Ovary (tissue), 10 donors: ENCODE measurements at regions of chr15 and their contacts with region 1.

Region 1: GRCh38 chr15:88904624-88905327 is 8.4 kb downstream of the MFGE8 start:
- DNase-seq: peak; percentile 63 to 84 (median 81)
- H3K4me3 ChIP-seq: no peak overlapping the region
- H3K27ac ChIP-seq: no peak overlapping the region
- H3K4me1 ChIP-seq: no peaks in the 10 kb centered on the region
- H3K27me3 ChIP-seq: no peaks in the 10 kb centered on the region
- CTCF ChIP-seq: peak; percentile 83 to 95 (median 87)
- EP300 ChIP-seq: no peak
- POLR2A ChIP-seq: no peak

Region 2: GRCh38 chr15:88484682-88485331 is 420.0 kb before region 1 on chr15:
- intact Hi-C with region 1: loop called in 1 of 4 experiments (anchors 10 kb)
- DNase-seq: no peak
- H3K4me3 ChIP-seq: no peak overlapping the region
- H3K27ac ChIP-seq: no peak overlapping the region
- H3K4me1 ChIP-seq: no peaks in the 10 kb centered on the region
- H3K27me3 ChIP-seq: no peaks in the 10 kb centered on the region
- CTCF ChIP-seq: no peak
- EP300 ChIP-seq: no peak
- POLR2A ChIP-seq: no peak

Region 3: GRCh38 chr15:88844749-88845386 is 59.9 kb before region 1 on chr15:
- intact Hi-C with region 1: no loop called
- DNase-seq: no peak
- H3K4me3 ChIP-seq: no peak overlapping the region
- H3K27ac ChIP-seq: no peak overlapping the region
- H3K4me1 ChIP-seq: no peaks in the 10 kb centered on the region
- H3K27me3 ChIP-seq: no peaks in the 10 kb centered on the region
- CTCF ChIP-seq: no peak
- EP300 ChIP-seq: no peak
- POLR2A ChIP-seq: no peak

Region 4: GRCh38 chr15:88959445-88959844 is 54.7 kb after region 1 on chr15:
- intact Hi-C with region 1: no loop called
- DNase-seq: no peak
- H3K4me3 ChIP-seq: no peak overlapping the region
- H3K27ac ChIP-seq: no peak overlapping the region
- H3K4me1 ChIP-seq: no peaks in the 10 kb centered on the region
- H3K27me3 ChIP-seq: no peaks in the 10 kb centered on the region
- CTCF ChIP-seq: no peak
- EP300 ChIP-seq: no peak
- POLR2A ChIP-seq: no peak

Region 5: DNA sequence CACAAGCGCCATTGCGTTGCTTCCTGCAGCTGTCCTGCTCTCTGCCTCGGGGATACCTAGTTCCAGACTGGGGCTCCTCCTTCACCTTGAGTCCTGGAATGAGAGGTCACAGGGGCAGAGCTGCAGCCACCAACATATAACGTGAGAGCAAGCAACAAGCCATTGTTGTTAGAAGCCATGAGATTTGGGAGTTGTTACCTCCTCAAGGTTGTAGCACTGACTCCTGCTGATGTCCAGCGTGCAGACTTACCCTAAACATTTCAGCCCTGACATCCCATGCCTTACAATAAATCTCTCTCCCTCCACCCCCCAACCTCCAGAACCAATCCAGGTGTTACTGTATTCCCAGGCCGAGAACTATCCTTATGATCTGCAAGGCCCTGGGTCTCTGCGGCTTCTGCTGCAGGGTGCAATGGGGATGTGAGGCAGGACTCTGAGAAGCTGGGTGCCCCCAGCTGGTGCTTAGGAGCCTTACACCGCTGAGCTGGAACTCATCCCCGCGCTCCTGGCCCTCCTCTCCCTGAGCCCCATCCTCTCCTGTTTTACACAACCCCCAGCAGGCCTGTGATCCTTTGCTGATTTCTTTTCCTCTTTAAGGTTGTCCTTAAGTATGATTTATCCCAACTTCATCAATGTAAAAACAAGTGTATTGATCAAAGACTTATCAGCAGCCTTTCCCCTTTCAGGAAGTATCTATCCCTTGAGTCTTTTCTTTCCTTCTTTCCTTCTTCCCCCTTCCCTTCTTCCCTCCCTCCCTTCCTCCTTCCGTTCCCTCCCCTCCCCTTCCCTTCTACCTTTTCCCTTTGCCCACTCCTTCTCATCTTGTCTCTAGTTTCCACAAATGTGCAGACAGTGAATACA is 99.3 kb after region 1 on chr15:
- intact Hi-C with region 1: loop called in 1 of 4 experiments (anchors 5 kb)
- DNase-seq: no peak
- H3K4me3 ChIP-seq: no peak overlapping the region
- H3K27ac ChIP-seq: no peak overlapping the region
- H3K4me1 ChIP-seq: peaks cover 7% of the 10 kb centered on the region
- H3K27me3 ChIP-seq: no peaks in the 10 kb centered on the region
- CTCF ChIP-seq: no peak
- EP300 ChIP-seq: no peak
- POLR2A ChIP-seq: no peak

Region 6: DNA sequence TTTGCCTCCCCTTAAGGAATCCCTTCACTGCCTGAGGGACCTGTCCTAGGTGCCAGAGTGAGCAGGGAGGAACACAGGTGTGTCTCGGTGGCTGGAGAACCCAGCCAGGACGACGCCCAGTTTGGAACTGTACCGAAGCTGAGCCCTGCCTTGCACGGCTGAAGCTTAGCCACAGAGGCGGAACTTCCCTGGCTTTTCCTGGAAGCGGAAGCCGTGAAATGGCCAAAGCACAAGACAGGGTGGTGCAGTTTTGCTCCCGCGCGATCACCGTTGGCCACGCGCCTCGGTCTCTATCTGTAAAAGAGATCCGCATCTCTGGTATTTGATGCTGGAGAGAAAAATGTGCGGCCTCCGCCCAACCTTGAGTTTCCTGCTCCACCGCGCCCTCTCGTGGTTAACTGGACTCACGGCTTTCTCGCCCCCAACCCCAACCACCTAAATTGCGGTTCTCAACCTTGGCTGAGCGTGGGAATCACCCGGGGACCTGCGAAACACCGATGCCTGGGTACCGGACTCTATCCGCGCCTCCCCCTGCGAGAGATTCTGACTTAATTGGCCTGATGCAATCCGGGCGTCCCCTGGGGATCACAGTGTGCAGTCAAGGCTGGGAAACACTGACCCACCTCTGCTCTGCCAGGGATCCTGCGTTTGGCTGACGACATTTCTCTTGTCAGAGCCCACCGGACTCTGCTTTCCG is 112.7 kb after region 1 on chr15:
- intact Hi-C with region 1: loop called in 3 of 4 experiments (anchors 2 to 10 kb)
- DNase-seq: peak; percentile 67 to 86 (median 81)
- H3K4me3 ChIP-seq: peak overlapping the region; percentile 25
- H3K27ac ChIP-seq: peak overlapping the region in 1 of 2 donors; percentile 3
- H3K4me1 ChIP-seq: peaks cover 7% of the 10 kb centered on the region
- H3K27me3 ChIP-seq: no peaks in the 10 kb centered on the region
- CTCF ChIP-seq: peak; percentile 67 to 69 (median 68)
- EP300 ChIP-seq: peak; percentile 81
- POLR2A ChIP-seq: no peak

Region 7: GRCh38 chr15:89070197-89071124 is 165.7 kb after region 1 on chr15:
- intact Hi-C with region 1: no loop called
- DNase-seq: no peak
- H3K4me3 ChIP-seq: no peak overlapping the region
- H3K27ac ChIP-seq: no peak overlapping the region
- H3K4me1 ChIP-seq: no peaks in the 10 kb centered on the region
- H3K27me3 ChIP-seq: no peaks in the 10 kb centered on the region
- CTCF ChIP-seq: no peak
- EP300 ChIP-seq: no peak
- POLR2A ChIP-seq: no peak

Region 8: GRCh38 chr15:89177633-89178306 is 273.0 kb after region 1 on chr15:
- intact Hi-C with region 1: loop called in 2 of 4 experiments (anchors 5 to 10 kb)
- DNase-seq: peak; percentile 50 to 75 (median 71)
- H3K4me3 ChIP-seq: no peak overlapping the region
- H3K27ac ChIP-seq: no peak overlapping the region
- H3K4me1 ChIP-seq: no peaks in the 10 kb centered on the region
- H3K27me3 ChIP-seq: no peaks in the 10 kb centered on the region
- CTCF ChIP-seq: peak; percentile 65 to 80 (median 80)
- EP300 ChIP-seq: no peak
- POLR2A ChIP-seq: no peak